ENCODE measurements at regions of chr4 and their contacts with region 1.

Region 1: GRCh38 chr4:159787901-159788300 is 685.0 kb downstream of the RAPGEF2 start:
- DNase-seq: peak; percentile 60
- H3K4me3 ChIP-seq: no peak overlapping the region
- H3K27ac ChIP-seq: peak overlapping the region; percentile 22
- H3K4me1 ChIP-seq: no peaks in the 10 kb centered on the region
- H3K27me3 ChIP-seq: no peaks in the 10 kb centered on the region
- CTCF ChIP-seq: no peak

Region 2: GRCh38 chr4:159487284-159487747 is 300.6 kb before region 1 on chr4:
- CTCF ChIA-PET with region 1: no interaction called
- POLR2A ChIA-PET with region 1: no interaction called
- intact Hi-C with region 1: no loop called
- DNase-seq: peak; percentile 95
- H3K4me3 ChIP-seq: no peak overlapping the region
- H3K27ac ChIP-seq: no peak overlapping the region
- H3K4me1 ChIP-seq: peaks cover 10% of the 10 kb centered on the region
- H3K27me3 ChIP-seq: no peaks in the 10 kb centered on the region
- CTCF ChIP-seq: peak; percentile 98

Region 3: DNA sequence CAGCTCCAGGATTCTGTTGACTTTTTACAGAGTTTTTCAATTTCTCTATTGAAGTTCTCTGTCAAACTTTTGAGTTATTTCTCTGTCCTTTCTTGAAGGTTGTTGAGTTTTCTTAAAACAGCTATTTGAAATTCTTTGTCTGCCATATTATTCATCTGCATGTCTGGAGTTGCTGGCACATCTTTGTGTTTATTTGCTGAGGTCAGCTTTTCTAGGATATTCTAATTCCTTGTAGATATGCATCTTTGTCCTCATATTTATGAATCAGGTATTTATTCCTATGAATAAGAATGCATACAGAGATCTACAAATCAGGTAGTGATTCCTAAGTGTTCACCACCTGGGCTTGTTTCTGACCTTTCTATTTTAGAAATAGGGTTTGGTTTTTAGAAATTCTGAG is 138.7 kb before region 1 on chr4:
- CTCF ChIA-PET with region 1: no interaction called
- POLR2A ChIA-PET with region 1: no interaction called
- intact Hi-C with region 1: no loop called
- DNase-seq: no peak
- H3K4me3 ChIP-seq: no peak overlapping the region
- H3K27ac ChIP-seq: no peak overlapping the region
- H3K4me1 ChIP-seq: no peaks in the 10 kb centered on the region
- H3K27me3 ChIP-seq: no peaks in the 10 kb centered on the region
- CTCF ChIP-seq: no peak

Region 4: GRCh38 chr4:159856451-159856850 is 68.5 kb after region 1 on chr4:
- CTCF ChIA-PET with region 1: no interaction called
- POLR2A ChIA-PET with region 1: no interaction called
- intact Hi-C with region 1: no loop called
- DNase-seq: no peak
- H3K4me3 ChIP-seq: no peak overlapping the region
- H3K27ac ChIP-seq: no peak overlapping the region
- H3K4me1 ChIP-seq: no peaks in the 10 kb centered on the region
- H3K27me3 ChIP-seq: no peaks in the 10 kb centered on the region
- CTCF ChIP-seq: no peak

Region 5: GRCh38 chr4:159899596-159899995 is 111.7 kb after region 1 on chr4:
- CTCF ChIA-PET with region 1: no interaction called
- POLR2A ChIA-PET with region 1: no interaction called
- intact Hi-C with region 1: loop called (anchors 10 kb)
- DNase-seq: peak; percentile 21
- H3K4me3 ChIP-seq: no peak overlapping the region
- H3K27ac ChIP-seq: no peak overlapping the region
- H3K4me1 ChIP-seq: peaks cover 6% of the 10 kb centered on the region
- H3K27me3 ChIP-seq: no peaks in the 10 kb centered on the region
- CTCF ChIP-seq: 0 out of 2 replicates have a peak, but pooled peaks have one; percentile 31

Measured in A673 (cell line).